ENCODE measurements at regions of chr1 and their contacts with region 1.

Region 1: DNA sequence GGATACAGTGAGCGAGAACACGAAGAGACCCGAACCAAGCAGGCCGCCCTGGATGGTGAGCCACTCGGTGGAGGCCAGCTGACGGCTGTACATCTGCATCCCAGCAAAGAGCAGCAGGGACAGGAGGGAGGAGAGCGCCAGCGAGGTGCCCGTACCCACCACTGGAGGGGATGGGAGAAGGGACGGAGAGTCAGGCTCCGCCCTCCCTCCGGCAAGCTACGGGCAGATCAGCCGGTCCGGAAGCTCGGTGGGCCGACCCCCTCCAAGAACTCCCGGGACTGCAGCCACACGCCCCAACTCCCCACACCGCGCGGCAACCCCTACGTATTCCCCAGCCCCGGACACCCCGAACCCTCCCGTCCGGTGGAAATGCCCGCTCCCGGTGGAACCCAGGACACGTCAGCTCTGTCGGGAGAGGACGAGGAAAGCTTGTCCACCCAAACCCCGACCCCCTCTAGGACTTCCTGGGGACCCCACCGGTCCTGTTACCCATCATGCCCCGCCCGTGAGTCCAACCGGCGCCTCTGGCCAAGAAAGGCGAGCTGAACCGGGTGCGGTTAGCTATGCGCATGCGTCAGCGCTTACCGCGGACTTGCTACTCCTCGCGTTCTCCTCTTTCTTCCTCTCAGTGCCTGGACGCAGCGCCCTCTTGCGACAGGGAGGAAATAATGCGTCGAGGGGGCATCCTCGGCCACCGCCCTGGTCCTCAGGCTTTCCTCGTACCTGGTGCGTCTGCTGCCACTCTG is at the start of gene KRTCAP2:
- DNase-seq: peak; percentile 89 to 93 (median 92)
- ATAC-seq: peak; percentile 91
- H3K4me3 ChIP-seq: peak within 1 kb of the TSS; percentile 90
- H3K4me3 Mint-ChIP-seq: peak within 1 kb of the TSS; percentile 94 to 100 (median 98)
- H3K27ac ChIP-seq: peak within 1 kb of the TSS; percentile 88
- H3K27ac Mint-ChIP-seq: peak within 1 kb of the TSS; percentile 95 to 99 (median 98)
- H3K4me1 ChIP-seq: peaks cover 11 to 18% of the 10 kb centered on the region in 2 donors
- H3K4me1 Mint-ChIP-seq: peaks cover 32 to 60% (median 47%) of the 10 kb centered on the region in 7 donors
- H3K27me3 ChIP-seq: no peaks in the 10 kb centered on the region
- H3K27me3 Mint-ChIP-seq: peaks cover 0 to 6% (median 0%) of the 10 kb centered on the region in 5 donors
- total RNA-seq, gene KRTCAP2: 97.4 to 236 (median 155) TPM

Region 2: GRCh38 chr1:155084722-155085503 is 88.0 kb before region 1 on chr1:
- CTCF ChIA-PET with region 1: interaction called, 88 read pairs
- POLR2A ChIA-PET with region 1: interaction called, 10 read pairs
- intact Hi-C with region 1: loop called (anchors 2 kb)
- DNase-seq: peak; percentile 87 to 96 (median 93)
- ATAC-seq: peak; percentile 86
- H3K4me3 ChIP-seq: peak overlapping the region; percentile 97
- H3K4me3 Mint-ChIP-seq: peak overlapping the region; percentile 88 to 100 (median 94)
- H3K27ac ChIP-seq: peak overlapping the region; percentile 63
- H3K27ac Mint-ChIP-seq: peak overlapping the region; percentile 88 to 98 (median 93)
- H3K4me1 ChIP-seq: peaks cover 51 to 53% of the 10 kb centered on the region in 2 donors
- H3K4me1 Mint-ChIP-seq: peaks cover 24 to 43% (median 41%) of the 10 kb centered on the region in 7 donors
- H3K27me3 ChIP-seq: peaks cover 28 to 31% of the 10 kb centered on the region in 2 donors
- H3K27me3 Mint-ChIP-seq: peaks cover 17 to 41% (median 23%) of the 10 kb centered on the region in 5 donors

Region 3: GRCh38 chr1:155135415-155136028 is 37.4 kb before region 1 on chr1 and contains the start of gene SLC50A1:
- CTCF ChIA-PET with region 1: interaction called, 7 read pairs
- POLR2A ChIA-PET with region 1: interaction called, 7 read pairs
- intact Hi-C with region 1: loop called (anchors 1 kb)
- DNase-seq: peak; percentile 86 to 96 (median 90)
- ATAC-seq: peak; percentile 93
- H3K4me3 ChIP-seq: peak within 1 kb of the TSS; percentile 99
- H3K4me3 Mint-ChIP-seq: peak within 1 kb of the TSS; percentile 91 to 100 (median 98)
- H3K27ac ChIP-seq: peak within 1 kb of the TSS; percentile 99
- H3K27ac Mint-ChIP-seq: peak within 1 kb of the TSS; percentile 95 to 100 (median 98)
- H3K4me1 ChIP-seq: peaks cover 8 to 15% of the 10 kb centered on the region in 2 donors
- H3K4me1 Mint-ChIP-seq: peaks cover 41 to 58% (median 46%) of the 10 kb centered on the region in 7 donors
- H3K27me3 ChIP-seq: no peaks in the 10 kb centered on the region
- H3K27me3 Mint-ChIP-seq: peaks cover 0 to 2% (median 0%) of the 10 kb centered on the region in 5 donors
- total RNA-seq, gene SLC50A1: 21.1 to 35.6 (median 24.3) TPM

Region 4: GRCh38 chr1:155208541-155209311 is 35.8 kb after region 1 on chr1 and contains the start of gene MTX1:
- CTCF ChIA-PET with region 1: interaction called, 16 read pairs
- POLR2A ChIA-PET with region 1: interaction called, 4 read pairs
- intact Hi-C with region 1: loop called (anchors 1 kb)
- DNase-seq: peak; percentile 83 to 91 (median 88)
- ATAC-seq: peak; percentile 89
- H3K4me3 ChIP-seq: peak within 1 kb of the TSS; percentile 100
- H3K4me3 Mint-ChIP-seq: peak within 1 kb of the TSS; percentile 81 to 92 (median 88)
- H3K27ac ChIP-seq: peak within 1 kb of the TSS; percentile 100
- H3K27ac Mint-ChIP-seq: peak within 1 kb of the TSS; percentile 92 to 99 (median 96)
- H3K4me1 ChIP-seq: peaks cover 20 to 21% of the 10 kb centered on the region in 2 donors
- H3K4me1 Mint-ChIP-seq: peaks cover 19 to 30% (median 24%) of the 10 kb centered on the region in 7 donors
- H3K27me3 ChIP-seq: no peaks in the 10 kb centered on the region
- H3K27me3 Mint-ChIP-seq: no peaks in the 10 kb centered on the region
- total RNA-seq, gene MTX1: 19.5 to 40.8 (median 22.0) TPM

Region 5: DNA sequence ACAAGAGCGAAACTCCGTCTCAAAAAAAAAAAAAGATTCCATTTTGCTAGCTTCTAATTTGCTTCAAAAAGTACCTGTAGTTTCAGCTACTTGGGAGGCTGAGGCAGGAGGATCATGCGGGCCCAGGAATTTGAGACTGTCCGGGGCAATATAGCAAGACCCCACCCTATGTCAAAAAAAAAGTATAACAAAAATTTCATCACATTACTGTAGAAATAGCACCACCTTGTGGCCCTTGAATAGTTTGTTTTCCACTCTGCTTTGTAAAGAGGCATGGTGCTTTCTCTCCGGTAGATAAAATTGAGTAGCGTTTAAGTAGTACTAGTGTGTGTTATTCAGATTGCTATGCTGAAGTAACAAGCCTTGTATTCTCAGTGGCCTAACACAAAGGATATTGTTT is 418.9 kb after region 1 on chr1:
- CTCF ChIA-PET with region 1: no interaction called
- POLR2A ChIA-PET with region 1: no interaction called
- intact Hi-C with region 1: loop called in 1 of 2 experiments (anchors 1 kb)
- DNase-seq: peak in 7 of 9 donors; percentile 42 to 71 (median 57)
- ATAC-seq: peak; percentile 85
- H3K4me3 ChIP-seq: no peak overlapping the region
- H3K4me3 Mint-ChIP-seq: no peak overlapping the region
- H3K27ac ChIP-seq: no peak overlapping the region
- H3K27ac Mint-ChIP-seq: peak overlapping the region in 1 of 9 donors; percentile 62
- H3K4me1 ChIP-seq: no peaks in the 10 kb centered on the region
- H3K4me1 Mint-ChIP-seq: peaks cover 0 to 4% (median 3%) of the 10 kb centered on the region in 7 donors
- H3K27me3 ChIP-seq: no peaks in the 10 kb centered on the region
- H3K27me3 Mint-ChIP-seq: no peaks in the 10 kb centered on the region